Heart left ventricle (tissue), 16 donors: ENCODE measurements at regions of chr7 and their contacts with region 1.

Region 1: GRCh38 chr7:157347217-157347904 is 10.6 kb downstream of the DNAJB6 start:
- DNase-seq: peak in 2 of 5 donors; percentile 42 to 65
- ATAC-seq: peak; percentile 28 to 76 (median 63)
- H3K4me3 ChIP-seq: peak overlapping the region in 2 of 12 donors; percentile 0 to 6
- H3K27ac ChIP-seq: peak overlapping the region in 8 of 12 donors; percentile 15 to 66 (median 37)
- H3K4me1 ChIP-seq: peaks cover 12 to 93% (median 80%) of the 10 kb centered on the region in 12 donors
- H3K27me3 ChIP-seq: no peaks in the 10 kb centered on the region
- CTCF ChIP-seq: no peak
- POLR2A ChIP-seq: no peak

Region 2: DNA sequence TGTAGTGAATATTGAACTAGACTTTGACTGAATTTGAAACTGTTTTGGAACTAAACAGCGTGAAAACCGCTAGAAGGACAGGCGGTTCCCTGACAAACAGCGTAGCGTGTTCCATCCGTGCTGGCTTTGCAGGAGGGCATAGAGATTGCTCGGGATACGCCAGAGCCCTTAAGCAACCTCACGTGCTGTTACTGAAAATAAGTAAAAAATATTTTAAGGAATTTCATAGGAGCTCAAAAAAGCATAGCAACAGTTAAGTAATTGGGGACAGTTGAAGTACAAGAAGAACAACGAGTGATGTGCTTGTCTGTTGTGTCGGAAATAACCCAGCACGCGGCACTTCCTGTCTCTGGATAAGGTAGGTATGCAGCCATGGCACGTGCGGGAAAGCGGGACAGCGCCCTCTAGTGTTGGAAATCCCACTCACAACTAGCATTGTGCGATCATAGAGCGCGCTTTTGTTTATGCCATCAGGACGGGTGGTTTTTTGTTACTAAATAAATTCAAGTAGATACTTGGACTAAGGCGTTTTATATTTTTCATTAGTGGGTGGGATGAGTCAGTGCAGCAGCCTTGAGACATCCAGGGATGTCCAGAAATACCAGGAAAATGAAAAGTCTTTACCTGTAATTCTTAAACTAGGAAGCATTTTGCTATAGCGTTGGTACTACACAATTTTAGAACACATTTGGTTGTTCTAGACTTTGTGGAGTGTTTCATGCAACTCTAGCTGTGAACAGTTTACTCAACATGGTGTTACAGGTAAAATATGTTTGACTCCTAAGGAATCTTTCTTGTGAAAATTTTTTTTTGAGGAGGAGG is 39.8 kb after region 1 on chr7:
- intact Hi-C with region 1: loop called in 2 of 10 experiments (anchors 5 kb)
- DNase-seq: peak; percentile 85 to 92 (median 90)
- ATAC-seq: peak; percentile 85 to 90 (median 87)
- H3K4me3 ChIP-seq: peak overlapping the region in 1 of 12 donors; percentile 13
- H3K27ac ChIP-seq: peak overlapping the region; percentile 33 to 87 (median 58)
- H3K4me1 ChIP-seq: peaks cover 0 to 49% (median 36%) of the 10 kb centered on the region in 12 donors
- H3K27me3 ChIP-seq: no peaks in the 10 kb centered on the region
- CTCF ChIP-seq: peak; percentile 85 to 96 (median 92)
- POLR2A ChIP-seq: no peak

Region 3: GRCh38 chr7:157397731-157398691 is 50.6 kb after region 1 on chr7:
- intact Hi-C with region 1: loop called in 1 of 10 experiments (anchors 5 kb)
- DNase-seq: peak in 4 of 5 donors; percentile 43 to 72 (median 64)
- ATAC-seq: peak; percentile 68 to 81 (median 76)
- H3K4me3 ChIP-seq: peak overlapping the region in 5 of 12 donors; percentile 0 to 17 (median 9)
- H3K27ac ChIP-seq: peak overlapping the region; percentile 59 to 97 (median 80)
- H3K4me1 ChIP-seq: peaks cover 0 to 70% (median 31%) of the 10 kb centered on the region in 12 donors
- H3K27me3 ChIP-seq: no peaks in the 10 kb centered on the region
- CTCF ChIP-seq: peak; percentile 15 to 65 (median 42)
- POLR2A ChIP-seq: no peak